ENCODE measurements at regions of chrX and their contacts with region 1.

Region 1: GRCh38 chrX:110847334-110847733 is 51.7 kb upstream of the CHRDL1 start:
- DNase-seq: peak; percentile 33 to 54
- ATAC-seq: peak; percentile 85 to 91
- H3K4me3 ChIP-seq: no peak overlapping the region
- H3K27ac ChIP-seq: no peak overlapping the region
- H3K4me1 ChIP-seq: peaks cover 6% of the 10 kb centered on the region; the same call in 1 of the 3 replicates
- CTCF ChIP-seq: peak; percentile 62
- EP300 ChIP-seq: no peak
- POLR2A ChIP-seq: no peak
- RAD21 ChIP-seq: peak; percentile 62 to 63; a peak in 4 of 5 replicates

Region 2: DNA sequence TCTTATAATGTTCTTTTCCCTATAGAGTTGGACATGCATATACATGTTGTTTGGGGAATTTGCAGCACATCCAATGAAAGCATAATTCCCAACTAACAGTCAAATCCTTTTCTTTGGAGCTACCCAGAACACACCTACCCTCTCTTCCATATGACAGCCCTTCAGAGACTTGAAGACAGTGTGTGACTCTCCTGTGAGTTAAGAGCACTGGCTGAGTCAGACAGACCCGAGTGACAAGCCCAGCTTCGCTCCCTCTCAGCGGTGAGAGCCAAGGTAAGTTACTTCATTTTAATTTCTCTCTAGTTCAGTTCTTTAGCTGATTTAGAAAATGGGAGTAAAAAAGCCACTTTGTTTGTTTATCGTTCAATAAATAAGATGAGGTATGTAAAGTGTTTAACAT is 402.3 kb before region 1 on chrX:
- CTCF ChIA-PET with region 1: interaction called, 19 read pairs
- POLR2A ChIA-PET with region 1: no interaction called
- DNase-seq: no peak
- ATAC-seq: no peak
- H3K4me3 ChIP-seq: no peak overlapping the region
- H3K27ac ChIP-seq: no peak overlapping the region
- H3K4me1 ChIP-seq: no peaks in the 10 kb centered on the region
- CTCF ChIP-seq: no peak
- EP300 ChIP-seq: no peak
- POLR2A ChIP-seq: no peak
- RAD21 ChIP-seq: no peak

Region 3: GRCh38 chrX:110450050-110450449 is 397.3 kb before region 1 on chrX:
- CTCF ChIA-PET with region 1: interaction called, 19 read pairs
- POLR2A ChIA-PET with region 1: no interaction called
- DNase-seq: peak; percentile 43 to 55
- ATAC-seq: peak; percentile 87 to 98
- H3K4me3 ChIP-seq: no peak overlapping the region
- H3K27ac ChIP-seq: no peak overlapping the region
- H3K4me1 ChIP-seq: no peaks in the 10 kb centered on the region
- CTCF ChIP-seq: peak; percentile 63
- EP300 ChIP-seq: no peak
- POLR2A ChIP-seq: no peak
- RAD21 ChIP-seq: peak; percentile 78 to 82